Activated naive CD8-positive, alpha-beta T cell treated with anti-CD3 and anti-CD28 coated beads, Interleukin-2, amount 10 ng/mL, durations not matched to agents 7 days and 5 days (primary cell): ENCODE measurements at regions of chr2 and their contacts with region 1.

Region 1: GRCh38 chr2:202265467-202266277 is at the start of gene NOP58:
- DNase-seq: peak; percentile 87
- ATAC-seq: peak; percentile 86
- H3K4me3 Mint-ChIP-seq: peak within 1 kb of the TSS; percentile 70
- H3K27ac Mint-ChIP-seq: peak within 1 kb of the TSS; percentile 75
- H3K4me1 Mint-ChIP-seq: peaks cover 21% of the 10 kb centered on the region
- H3K27me3 Mint-ChIP-seq: no peaks in the 10 kb centered on the region
- total RNA-seq, gene NOP58: 103 TPM

Region 2: DNA sequence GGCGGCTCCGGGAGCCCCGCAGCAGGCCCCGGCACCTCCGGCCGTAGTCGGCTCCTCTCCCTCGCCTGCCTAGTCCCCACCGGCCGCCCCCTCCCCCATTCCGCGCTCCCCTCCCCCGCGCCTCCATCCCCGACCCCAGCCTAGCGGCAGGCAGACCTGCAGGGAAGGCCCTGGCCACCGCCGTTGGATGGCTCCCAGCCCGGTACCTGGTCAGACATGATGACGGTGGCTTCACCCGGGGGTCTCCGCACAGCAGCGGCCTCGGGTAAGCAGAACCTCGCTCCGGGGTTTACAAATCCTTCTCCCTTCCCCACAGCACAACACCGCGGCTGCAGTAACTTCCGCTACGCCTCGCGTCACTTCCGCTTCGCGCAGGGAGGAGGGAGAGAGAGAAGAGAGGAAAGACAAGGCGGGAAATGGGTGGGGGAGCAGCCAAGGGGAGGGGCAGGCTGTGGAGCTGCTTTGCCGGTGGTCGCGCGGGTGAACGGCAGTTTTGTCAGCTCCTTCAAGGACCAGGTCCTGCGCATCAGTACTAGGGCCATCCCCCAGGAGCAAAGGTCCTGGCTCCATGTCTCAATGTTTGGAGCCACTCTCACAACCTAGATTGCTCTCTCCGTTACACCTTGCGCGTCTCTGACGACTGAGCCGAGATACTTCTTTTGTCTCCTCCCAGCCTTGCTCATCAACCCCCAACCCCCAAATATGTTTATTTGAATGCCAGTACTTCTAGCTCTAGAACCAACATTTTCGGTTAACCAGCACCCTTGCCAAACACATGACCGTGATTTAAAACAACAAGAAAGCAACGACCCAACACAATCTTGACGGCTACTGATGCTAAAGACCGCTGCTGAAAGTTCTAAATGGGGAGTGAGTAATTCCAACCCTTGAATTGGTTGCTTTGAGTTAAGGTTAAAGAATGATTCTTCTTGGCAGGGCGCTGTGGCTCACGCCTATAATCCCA is 27.2 kb before region 1 on chr2 and contains the start of gene SUMO1:
- POLR2A ChIA-PET with region 1: interaction called, 16 read pairs
- DNase-seq: peak; percentile 89
- ATAC-seq: peak; percentile 93
- H3K4me3 Mint-ChIP-seq: peak within 1 kb of the TSS; percentile 93
- H3K27ac Mint-ChIP-seq: peak within 1 kb of the TSS; percentile 99
- H3K4me1 Mint-ChIP-seq: peaks cover 16% of the 10 kb centered on the region
- H3K27me3 Mint-ChIP-seq: no peaks in the 10 kb centered on the region
- total RNA-seq, gene SUMO1: 84.6 to 85.5 TPM